ENCODE measurements at regions of chr2 and their contacts with region 1.

Region 1: DNA sequence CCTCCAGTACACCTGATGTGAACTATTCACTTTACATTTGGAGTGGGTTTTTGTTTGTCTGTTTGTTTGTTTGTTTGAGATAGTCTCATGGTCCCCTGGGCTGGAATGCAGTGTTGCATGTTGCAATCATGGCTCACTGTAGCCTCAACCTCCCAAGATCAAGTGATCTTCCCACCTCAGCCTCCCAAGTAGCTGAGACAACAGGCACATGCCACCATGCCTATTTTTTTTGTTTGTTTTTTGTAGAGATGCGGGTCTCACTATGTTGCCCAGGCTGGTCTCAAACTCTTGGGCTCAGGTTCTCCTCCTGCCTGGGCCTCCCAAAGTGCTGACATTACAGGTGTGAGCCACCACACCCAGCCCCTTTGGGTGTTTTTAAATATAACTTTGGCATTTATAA is 37.6 kb downstream of the ARL5A start:
- DNase-seq: no peak
- H3K4me3 ChIP-seq: no peak overlapping the region
- H3K27ac ChIP-seq: no peak overlapping the region
- H3K4me1 ChIP-seq: no peaks in the 10 kb centered on the region
- H3K27me3 ChIP-seq: no peaks in the 10 kb centered on the region
- CTCF ChIP-seq: no peak
- POLR2A ChIP-seq: no peak

Region 2: DNA sequence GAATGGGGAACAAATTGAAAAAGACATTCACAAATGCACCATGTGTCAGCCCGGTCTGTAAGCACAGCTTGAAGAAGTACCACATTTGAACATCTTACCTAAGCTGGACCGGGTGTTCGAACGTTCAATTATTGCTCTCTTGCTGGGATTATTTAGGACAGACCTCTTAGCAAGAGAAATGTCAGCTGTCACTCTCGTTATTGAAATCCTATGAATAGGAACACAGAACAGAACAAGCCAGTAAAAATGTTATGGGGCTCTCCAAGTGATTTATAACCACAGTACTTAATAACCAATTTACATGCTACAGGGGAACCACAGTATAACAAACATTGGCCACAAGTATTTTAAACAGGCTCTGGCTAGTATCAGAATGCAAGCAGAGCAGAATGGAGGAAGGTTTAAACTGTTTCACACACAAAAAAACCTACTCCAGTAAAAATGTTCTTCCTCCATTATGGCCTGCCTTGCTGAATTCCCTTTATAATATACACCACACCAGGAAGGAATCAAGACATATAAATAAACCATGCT is 70.0 kb after region 1 on chr2:
- intact Hi-C with region 1: loop called (anchors 1 kb)
- DNase-seq: no peak
- H3K4me3 ChIP-seq: no peak overlapping the region
- H3K27ac ChIP-seq: peak overlapping the region in 1 of 2 donors; percentile 7
- H3K4me1 ChIP-seq: no peaks in the 10 kb centered on the region
- H3K27me3 ChIP-seq: no peaks in the 10 kb centered on the region
- CTCF ChIP-seq: no peak
- POLR2A ChIP-seq: no peak

Measured in breast epithelium (tissue), 4 donors.